Upper lobe of right lung (tissue), 1 donor: ENCODE measurements at regions of chr15 and their contacts with region 1.

Region 1: DNA sequence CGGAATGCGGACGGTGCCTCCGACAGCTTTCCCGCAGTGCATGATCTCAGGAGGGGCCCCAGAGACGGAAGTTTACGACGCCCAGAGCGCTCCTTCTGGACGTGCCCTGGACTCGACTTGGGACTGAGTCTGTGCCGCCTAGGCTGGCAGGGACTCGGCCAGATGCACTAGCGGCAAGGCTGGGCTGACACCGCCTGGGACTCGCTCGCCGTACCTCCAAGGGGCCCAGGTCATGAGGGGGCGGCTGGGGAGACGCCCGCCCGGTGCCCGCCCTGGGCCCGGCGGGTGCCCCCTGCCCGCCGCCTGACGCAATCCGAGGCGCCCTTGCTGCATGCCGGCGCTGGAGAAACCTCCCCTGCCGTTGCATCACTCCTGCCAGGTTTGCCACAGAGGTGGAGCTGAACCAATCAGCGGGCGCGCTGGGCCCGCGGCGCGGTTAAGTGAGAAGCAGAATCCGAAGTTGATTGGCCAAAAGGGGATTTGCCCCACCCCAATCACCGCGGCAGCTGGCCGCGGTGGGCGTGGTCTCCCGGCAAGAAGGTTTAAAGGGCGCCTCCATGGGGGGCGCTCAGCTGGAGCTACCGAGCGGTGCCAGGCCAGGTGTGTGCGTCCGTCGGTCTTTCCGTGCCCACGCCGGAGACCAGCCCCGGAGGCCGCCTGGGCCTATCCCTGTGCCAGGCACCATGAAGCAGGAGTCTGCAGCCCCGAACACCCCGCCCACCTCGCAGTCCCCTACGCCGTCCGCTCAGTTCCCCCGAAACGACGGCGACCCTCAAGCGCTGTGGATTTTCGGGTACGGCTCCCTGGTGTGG is at the start of gene CHAC1:
- DNase-seq: peak; percentile 98
- ATAC-seq: peak; percentile 94
- H3K4me3 ChIP-seq: peak within 1 kb of the TSS; percentile 71
- H3K27ac ChIP-seq: peak within 1 kb of the TSS; percentile 79
- H3K4me1 ChIP-seq: peaks cover 16% of the 10 kb centered on the region
- H3K27me3 ChIP-seq: no peaks in the 10 kb centered on the region
- CTCF ChIP-seq: no peak
- total RNA-seq, gene CHAC1: 4.4 TPM

Region 2: DNA sequence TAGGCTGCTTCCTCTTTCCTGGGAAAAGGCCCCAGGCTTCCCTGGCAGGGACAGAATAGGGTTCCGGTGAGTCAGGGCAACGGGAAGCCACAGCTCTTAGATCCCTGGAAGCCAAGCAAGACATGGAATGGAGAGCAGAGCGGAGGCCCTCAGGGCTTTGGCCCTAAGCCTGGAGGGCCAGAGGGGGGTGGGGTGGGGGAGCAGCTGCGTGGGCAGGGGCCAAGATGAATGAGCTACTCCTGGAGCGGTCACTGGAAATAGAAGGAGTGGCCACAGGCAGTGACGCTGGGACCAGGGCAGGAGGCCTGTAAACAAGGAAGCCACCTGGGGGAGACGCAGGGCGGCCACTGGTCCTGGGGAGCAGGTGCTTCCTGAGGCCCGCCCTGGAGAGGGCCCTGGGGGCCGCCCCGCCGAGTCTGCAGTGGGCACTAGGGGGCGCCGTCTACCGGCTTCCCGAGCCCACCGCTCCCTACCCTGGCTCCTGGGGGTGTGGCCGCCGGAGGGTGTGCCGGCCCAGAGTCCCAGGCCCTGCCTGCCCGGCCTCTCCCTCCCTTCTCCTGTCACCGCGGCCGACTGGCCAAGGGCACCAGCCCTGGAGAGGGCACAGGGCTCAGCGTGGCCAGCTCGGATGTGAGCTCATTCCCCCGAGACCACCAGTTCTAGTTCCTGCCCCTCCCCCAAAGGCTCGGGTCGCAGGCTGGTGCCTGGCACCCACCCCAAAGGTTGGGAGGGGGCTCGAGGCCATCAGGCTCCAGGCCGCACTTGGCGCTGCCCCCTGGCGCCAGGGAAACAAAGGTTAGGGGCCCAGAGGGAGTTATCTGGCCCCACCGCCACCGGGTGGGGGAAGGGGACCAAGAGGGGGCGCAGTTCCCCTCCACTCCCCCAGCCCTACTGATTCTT is 46.8 kb before region 1 on chr15:
- intact Hi-C with region 1: no loop called
- DNase-seq: peak; percentile 95
- ATAC-seq: peak; percentile 88
- H3K4me3 ChIP-seq: peak overlapping the region; percentile 47
- H3K27ac ChIP-seq: peak overlapping the region; percentile 80
- H3K4me1 ChIP-seq: peaks cover 49% of the 10 kb centered on the region
- H3K27me3 ChIP-seq: no peaks in the 10 kb centered on the region
- CTCF ChIP-seq: peak; percentile 85

Region 3: DNA sequence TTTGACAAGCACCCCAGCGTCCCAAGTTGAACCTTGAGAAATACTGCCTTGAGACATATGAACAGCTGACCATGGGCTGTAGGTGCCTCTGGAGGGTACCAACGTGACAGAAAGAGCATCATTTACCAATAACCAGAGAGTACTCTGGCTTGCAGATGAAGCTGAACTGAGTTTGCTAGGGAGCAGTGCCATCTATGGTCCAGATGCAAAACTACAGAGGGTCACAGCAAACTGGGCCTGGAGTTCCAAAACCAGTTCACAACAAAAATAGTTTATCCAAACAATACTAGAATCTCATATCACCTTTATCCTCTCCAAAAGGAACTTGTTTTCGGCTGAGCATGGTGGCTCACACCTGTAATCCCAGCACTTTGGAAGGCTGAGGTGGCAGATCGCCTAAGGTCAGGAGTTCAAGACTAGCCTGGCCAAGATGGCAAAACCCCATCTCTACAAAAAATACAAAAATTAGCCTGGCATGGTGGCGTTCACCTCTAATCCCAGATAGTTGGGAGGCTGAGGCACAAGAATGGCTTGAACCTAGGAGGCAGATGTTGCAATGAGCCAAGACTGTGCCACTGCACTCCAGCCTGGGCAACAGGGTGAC is 69.5 kb after region 1 on chr15:
- intact Hi-C with region 1: loop called (anchors 10 kb)
- DNase-seq: no peak
- ATAC-seq: peak; percentile 65
- H3K4me3 ChIP-seq: no peak overlapping the region
- H3K27ac ChIP-seq: no peak overlapping the region
- H3K4me1 ChIP-seq: peaks cover 45% of the 10 kb centered on the region
- H3K27me3 ChIP-seq: no peaks in the 10 kb centered on the region
- CTCF ChIP-seq: peak; percentile 72